Panc1 (cell line): ENCODE measurements at regions of chr3 and their contacts with region 1.

Region 1: GRCh38 chr3:152093901-152094300 is 174.8 kb upstream of the MBNL1 start:
- DNase-seq: no peak
- ATAC-seq: no peak
- H3K4me3 ChIP-seq: no peak overlapping the region
- H3K27ac ChIP-seq: no peak overlapping the region
- H3K4me1 ChIP-seq: no peaks in the 10 kb centered on the region; the same call in 1 of the 2 replicates
- H3K27me3 ChIP-seq: no peaks in the 10 kb centered on the region
- CTCF ChIP-seq: no peak

Region 2: GRCh38 chr3:152121292-152121654 is 27.4 kb after region 1 on chr3:
- CTCF ChIA-PET with region 1: no interaction called
- POLR2A ChIA-PET with region 1: no interaction called
- in situ Hi-C with region 1: no loop called
- intact Hi-C with region 1: loop called (anchors 1 kb)
- DNase-seq: peak; percentile 13
- ATAC-seq: peak; percentile 73; the same call in 1 of the 2 replicates
- H3K4me3 ChIP-seq: no peak overlapping the region
- H3K27ac ChIP-seq: no peak overlapping the region
- H3K4me1 ChIP-seq: no peaks in the 10 kb centered on the region
- H3K27me3 ChIP-seq: no peaks in the 10 kb centered on the region
- CTCF ChIP-seq: no peak